Activated B cell treated with CpG ODN at 0.5 μM for 24 hours (primary cell): ENCODE measurements at regions of chr7 and their contacts with region 1.

Region 1: DNA sequence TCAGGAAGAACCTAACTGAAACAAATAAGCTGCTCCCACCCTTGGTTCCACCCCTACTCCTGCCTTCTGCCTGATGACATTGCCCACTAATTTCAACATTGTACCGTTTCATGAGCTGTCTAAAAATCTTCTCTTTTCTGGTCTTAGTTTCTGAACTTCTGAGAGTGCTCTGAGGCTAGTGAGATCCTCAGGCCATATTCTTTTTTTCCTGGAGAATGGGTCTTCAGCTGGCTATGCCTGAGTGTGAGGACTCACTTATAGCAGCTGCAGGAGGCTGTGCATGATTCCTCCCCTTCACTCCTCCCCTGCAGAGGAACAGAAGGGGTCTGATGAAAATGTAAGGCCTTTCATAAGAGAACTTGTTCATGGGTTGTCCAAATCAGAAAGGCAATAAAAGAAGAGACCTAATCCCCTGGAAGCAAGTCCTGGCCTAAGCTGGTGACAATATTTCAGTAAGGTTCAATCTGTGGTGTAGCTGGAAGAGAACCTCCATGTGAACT is 11.1 kb downstream of the HOXA4 start:
- DNase-seq: no peak
- ATAC-seq: no peak
- H3K4me3 Mint-ChIP-seq: no peak overlapping the region
- H3K27ac Mint-ChIP-seq: no peak overlapping the region
- H3K4me1 Mint-ChIP-seq: no peaks in the 10 kb centered on the region
- H3K27me3 Mint-ChIP-seq: peaks cover 11% of the 10 kb centered on the region
- CTCF ChIP-seq: no peak

Region 2: DNA sequence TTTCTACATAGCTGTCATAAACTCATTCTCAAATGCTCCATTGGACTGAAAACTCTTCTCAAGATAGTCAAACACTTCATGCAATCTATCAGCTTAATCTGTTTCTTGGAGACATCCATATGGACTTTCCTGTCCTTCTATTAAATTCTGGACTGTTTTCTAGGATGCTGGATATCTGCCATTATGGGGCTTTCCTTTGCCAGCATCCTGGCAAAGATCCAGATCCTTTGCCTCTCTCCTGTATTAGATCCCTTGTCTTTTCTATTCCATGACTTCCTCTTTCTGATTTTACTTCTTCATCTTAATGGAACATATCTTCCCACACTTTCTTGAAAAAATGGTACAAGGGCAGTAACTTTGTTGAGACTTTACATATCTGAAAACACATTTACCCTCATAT is 219.2 kb before region 1 on chr7:
- CTCF ChIA-PET with region 1: no interaction called
- POLR2A ChIA-PET with region 1: no interaction called
- intact Hi-C with region 1: no loop called
- DNase-seq: no peak
- ATAC-seq: no peak
- H3K4me3 Mint-ChIP-seq: no peak overlapping the region
- H3K27ac Mint-ChIP-seq: no peak overlapping the region
- H3K4me1 Mint-ChIP-seq: no peaks in the 10 kb centered on the region
- H3K27me3 Mint-ChIP-seq: peaks cover 14% of the 10 kb centered on the region
- CTCF ChIP-seq: no peak

Region 3: GRCh38 chr7:26930201-26930600 is 189.3 kb before region 1 on chr7:
- CTCF ChIA-PET with region 1: no interaction called
- POLR2A ChIA-PET with region 1: no interaction called
- intact Hi-C with region 1: no loop called
- DNase-seq: no peak
- ATAC-seq: no peak
- H3K4me3 Mint-ChIP-seq: no peak overlapping the region
- H3K27ac Mint-ChIP-seq: no peak overlapping the region
- H3K4me1 Mint-ChIP-seq: no peaks in the 10 kb centered on the region
- H3K27me3 Mint-ChIP-seq: peaks cover 9% of the 10 kb centered on the region
- CTCF ChIP-seq: no peak

Region 4: DNA sequence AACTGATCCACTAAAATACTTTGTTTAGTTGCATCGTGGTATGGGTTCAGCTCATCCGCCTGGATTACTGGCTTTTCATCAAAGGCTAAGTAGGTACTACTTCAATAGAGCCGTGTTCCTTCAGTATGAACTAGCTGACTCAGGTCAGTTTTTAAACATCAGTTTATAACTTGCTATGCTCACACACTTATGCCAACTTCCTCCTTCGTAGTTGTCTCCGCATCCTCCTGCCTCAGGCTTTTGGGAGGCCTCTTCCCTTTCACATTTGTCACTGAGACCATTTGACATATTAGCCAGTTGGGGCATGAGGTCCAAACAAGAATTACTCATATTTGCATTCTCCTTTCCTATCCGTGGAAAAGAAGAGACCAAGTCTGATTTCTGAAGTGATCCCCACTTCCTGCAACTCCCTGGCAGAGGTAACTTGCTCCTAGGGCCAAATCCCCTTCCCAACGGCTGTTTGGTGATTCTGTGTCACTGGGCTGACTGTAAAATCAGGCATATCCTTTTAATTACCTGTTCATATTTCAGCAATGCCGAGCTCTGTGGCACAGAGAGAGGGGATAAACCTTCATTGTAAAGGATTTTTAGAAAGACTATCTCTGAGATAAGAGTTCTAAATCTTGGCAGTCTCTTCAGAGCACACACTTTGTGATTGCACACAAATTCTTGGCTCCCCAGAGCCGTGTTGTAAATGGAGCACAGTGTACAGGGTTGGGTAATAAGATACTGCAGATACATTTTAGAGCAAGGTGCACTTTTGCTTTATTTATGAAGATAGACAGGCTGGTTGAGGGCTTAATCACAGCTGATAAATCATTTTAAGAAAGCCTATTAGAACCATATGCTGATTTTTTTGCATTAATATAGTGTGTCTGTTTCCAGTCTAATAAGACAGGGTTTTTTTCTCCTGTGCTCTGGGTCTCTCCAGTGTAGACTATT is 1400.9 kb after region 1 on chr7:
- CTCF ChIA-PET with region 1: no interaction called
- POLR2A ChIA-PET with region 1: interaction called, 12 read pairs
- intact Hi-C with region 1: no loop called
- DNase-seq: no peak
- ATAC-seq: no peak
- H3K4me3 Mint-ChIP-seq: no peak overlapping the region
- H3K27ac Mint-ChIP-seq: no peak overlapping the region
- H3K4me1 Mint-ChIP-seq: peaks cover 9% of the 10 kb centered on the region
- H3K27me3 Mint-ChIP-seq: no peaks in the 10 kb centered on the region
- CTCF ChIP-seq: no peak